ENCODE measurements at regions of chr7 and their contacts with region 1.

Region 1: DNA sequence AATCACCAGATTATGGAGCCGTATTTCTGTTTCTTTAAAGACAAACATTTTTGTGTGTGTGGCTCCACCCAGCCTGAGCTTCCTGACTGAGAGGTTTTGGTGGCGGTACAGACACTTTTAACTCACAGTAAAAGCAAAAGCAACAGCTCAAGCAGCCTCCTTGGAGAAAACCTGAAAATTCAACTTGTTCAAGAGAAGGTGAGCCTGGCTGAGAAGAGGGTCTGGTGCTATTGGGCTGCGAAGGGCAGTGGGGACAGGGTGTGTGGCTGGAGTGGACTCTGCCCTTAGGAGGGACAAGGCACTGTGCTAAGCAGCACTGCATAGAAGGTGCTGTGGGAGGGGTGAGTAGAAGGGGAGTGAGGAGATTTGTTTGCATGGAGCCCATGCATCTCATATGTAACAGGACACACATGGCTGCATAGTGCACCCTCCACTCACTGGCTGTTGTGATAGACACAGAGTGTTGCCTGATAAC is at the start of gene GIMAP7:
- DNase-seq: peak; percentile 38 to 90 (median 82)
- ATAC-seq: peak; percentile 86
- H3K4me3 ChIP-seq: peak within 1 kb of the TSS; percentile 94
- H3K4me3 Mint-ChIP-seq: peak within 1 kb of the TSS; percentile 93 to 100 (median 99)
- H3K27ac ChIP-seq: peak within 1 kb of the TSS; percentile 84
- H3K27ac Mint-ChIP-seq: peak within 1 kb of the TSS; percentile 94 to 99 (median 98)
- H3K4me1 ChIP-seq: peaks cover 45% of the 10 kb centered on the region in 2 donors
- H3K4me1 Mint-ChIP-seq: peaks cover 38 to 48% (median 46%) of the 10 kb centered on the region in 7 donors
- H3K27me3 ChIP-seq: no peaks in the 10 kb centered on the region
- H3K27me3 Mint-ChIP-seq: no peaks in the 10 kb centered on the region
- total RNA-seq, gene GIMAP7: 66.3 to 555 (median 321) TPM

Region 2: GRCh38 chr7:150322833-150323681 is 191.7 kb before region 1 on chr7 and contains the starts of genes ACTR3C and LRRC61:
- CTCF ChIA-PET with region 1: no interaction called
- POLR2A ChIA-PET with region 1: no interaction called
- intact Hi-C with region 1: loop called in 1 of 2 experiments (anchors 5 kb)
- DNase-seq: peak; percentile 23 to 75 (median 41)
- ATAC-seq: peak; percentile 67
- H3K4me3 ChIP-seq: peak within 1 kb of the TSS; percentile 95
- H3K4me3 Mint-ChIP-seq: peak within 1 kb of the TSS; percentile 88 to 100 (median 98)
- H3K27ac ChIP-seq: peak within 1 kb of the TSS; percentile 85
- H3K27ac Mint-ChIP-seq: peak within 1 kb of the TSS; percentile 94 to 99 (median 98)
- H3K4me1 ChIP-seq: peaks cover 5 to 21% of the 10 kb centered on the region in 2 donors
- H3K4me1 Mint-ChIP-seq: peaks cover 25 to 57% (median 44%) of the 10 kb centered on the region in 7 donors
- H3K27me3 ChIP-seq: no peaks in the 10 kb centered on the region
- H3K27me3 Mint-ChIP-seq: no peaks in the 10 kb centered on the region
- total RNA-seq, gene ACTR3C: 7.0 to 13.2 (median 10.6) TPM
- total RNA-seq, gene LRRC61: 8.3 to 30.0 (median 11.5) TPM

Region 3: GRCh38 chr7:150413640-150414081 is 101.1 kb before region 1 on chr7:
- CTCF ChIA-PET with region 1: no interaction called
- POLR2A ChIA-PET with region 1: no interaction called
- intact Hi-C with region 1: no loop called
- DNase-seq: no peak
- ATAC-seq: no peak
- H3K4me3 ChIP-seq: no peak overlapping the region
- H3K4me3 Mint-ChIP-seq: no peak overlapping the region
- H3K27ac ChIP-seq: no peak overlapping the region
- H3K27ac Mint-ChIP-seq: peak overlapping the region in 1 of 9 donors; percentile 20
- H3K4me1 ChIP-seq: no peaks in the 10 kb centered on the region
- H3K4me1 Mint-ChIP-seq: peaks cover 2 to 13% (median 3%) of the 10 kb centered on the region in 7 donors
- H3K27me3 ChIP-seq: no peaks in the 10 kb centered on the region
- H3K27me3 Mint-ChIP-seq: no peaks in the 10 kb centered on the region

Region 4: GRCh38 chr7:150466477-150466876 is 48.3 kb before region 1 on chr7:
- CTCF ChIA-PET with region 1: interaction called, 4 read pairs
- POLR2A ChIA-PET with region 1: interaction called, 637 read pairs
- intact Hi-C with region 1: no loop called
- DNase-seq: no peak
- ATAC-seq: no peak
- H3K4me3 ChIP-seq: no peak overlapping the region
- H3K4me3 Mint-ChIP-seq: peak overlapping the region in 7 of 10 donors; percentile 46 to 91 (median 61)
- H3K27ac ChIP-seq: peak overlapping the region; percentile 34
- H3K27ac Mint-ChIP-seq: peak overlapping the region in 7 of 9 donors; percentile 70 to 97 (median 86)
- H3K4me1 ChIP-seq: peaks cover 50 to 60% of the 10 kb centered on the region in 2 donors
- H3K4me1 Mint-ChIP-seq: peaks cover 61 to 98% (median 95%) of the 10 kb centered on the region in 7 donors
- H3K27me3 ChIP-seq: no peaks in the 10 kb centered on the region
- H3K27me3 Mint-ChIP-seq: no peaks in the 10 kb centered on the region

Region 5: GRCh38 chr7:150556521-150557138 is 41.8 kb after region 1 on chr7:
- CTCF ChIA-PET with region 1: no interaction called
- POLR2A ChIA-PET with region 1: interaction called, 526 read pairs
- intact Hi-C with region 1: loop called in 1 of 2 experiments (anchors 1 kb)
- DNase-seq: peak in 7 of 9 donors; percentile 45 to 84 (median 73)
- ATAC-seq: peak; percentile 99
- H3K4me3 ChIP-seq: peak overlapping the region; percentile 42
- H3K4me3 Mint-ChIP-seq: peak overlapping the region; percentile 48 to 92 (median 78)
- H3K27ac ChIP-seq: peak overlapping the region; percentile 66
- H3K27ac Mint-ChIP-seq: peak overlapping the region; percentile 89 to 99 (median 94)
- H3K4me1 ChIP-seq: peaks cover 47 to 74% of the 10 kb centered on the region in 2 donors
- H3K4me1 Mint-ChIP-seq: peaks cover 45 to 95% (median 90%) of the 10 kb centered on the region in 7 donors
- H3K27me3 ChIP-seq: no peaks in the 10 kb centered on the region
- H3K27me3 Mint-ChIP-seq: no peaks in the 10 kb centered on the region

Region 6: GRCh38 chr7:150685219-150686029 is 170.6 kb after region 1 on chr7 and contains the start of gene GIMAP2:
- CTCF ChIA-PET with region 1: no interaction called
- POLR2A ChIA-PET with region 1: interaction called, 70 read pairs
- intact Hi-C with region 1: loop called in 1 of 2 experiments (anchors 2 kb)
- DNase-seq: peak in 7 of 9 donors; percentile 40 to 73 (median 65)
- ATAC-seq: peak; percentile 90
- H3K4me3 ChIP-seq: peak within 1 kb of the TSS; percentile 97
- H3K4me3 Mint-ChIP-seq: peak within 1 kb of the TSS; percentile 88 to 100 (median 98)
- H3K27ac ChIP-seq: peak within 1 kb of the TSS; percentile 78
- H3K27ac Mint-ChIP-seq: peak within 1 kb of the TSS; percentile 91 to 100 (median 97)
- H3K4me1 ChIP-seq: peaks cover 49 to 53% of the 10 kb centered on the region in 2 donors
- H3K4me1 Mint-ChIP-seq: peaks cover 50 to 87% (median 81%) of the 10 kb centered on the region in 7 donors
- H3K27me3 ChIP-seq: no peaks in the 10 kb centered on the region
- H3K27me3 Mint-ChIP-seq: no peaks in the 10 kb centered on the region
- total RNA-seq, gene GIMAP2: 79.4 to 286 (median 122) TPM

Region 7: DNA sequence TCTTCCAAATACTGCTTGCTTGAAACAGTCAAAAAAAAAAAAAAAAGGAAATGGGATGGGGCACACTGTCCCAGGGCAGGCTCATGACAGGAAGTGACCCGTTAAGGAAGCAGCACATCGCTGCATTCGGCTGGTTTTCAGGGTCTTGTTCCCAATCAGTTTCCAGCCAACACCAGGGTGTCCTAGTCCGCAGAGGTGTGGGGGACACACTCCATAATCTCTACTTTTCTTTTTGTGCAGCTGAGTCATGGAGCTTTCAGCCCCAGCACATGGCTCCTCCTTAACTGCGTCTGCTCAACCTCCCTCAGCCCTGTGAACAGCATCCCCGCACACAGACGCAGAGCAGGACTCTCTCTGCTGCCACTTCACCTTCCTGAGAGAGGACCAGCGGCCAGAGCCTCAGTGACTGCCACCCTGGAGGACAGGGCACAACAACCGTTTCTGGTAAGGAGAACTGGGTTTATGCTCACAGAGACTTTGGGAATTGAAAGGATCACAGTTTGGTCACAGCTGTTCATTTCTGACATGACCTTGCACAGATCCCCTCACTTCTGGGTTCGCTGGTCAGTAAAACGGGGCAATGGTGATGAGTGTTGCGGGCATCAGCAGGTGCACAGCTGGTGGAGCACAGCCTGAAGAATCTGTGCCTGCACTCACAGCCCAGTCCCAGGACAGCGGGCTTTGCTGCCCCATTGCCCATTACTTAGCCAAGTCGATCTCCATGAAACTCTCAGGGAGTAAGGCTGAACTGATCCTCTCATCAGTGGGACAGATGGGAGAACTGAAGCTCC is 222.7 kb after region 1 on chr7 and contains the start of gene GIMAP5:
- CTCF ChIA-PET with region 1: interaction called, 5 read pairs
- POLR2A ChIA-PET with region 1: interaction called, 212 read pairs
- intact Hi-C with region 1: loop called (anchors 1 to 2 kb)
- DNase-seq: peak in 6 of 9 donors; percentile 47 to 57 (median 56)
- ATAC-seq: peak; percentile 79
- H3K4me3 ChIP-seq: peak within 1 kb of the TSS; percentile 84
- H3K4me3 Mint-ChIP-seq: peak within 1 kb of the TSS; percentile 90 to 100 (median 98)
- H3K27ac ChIP-seq: peak within 1 kb of the TSS; percentile 82
- H3K27ac Mint-ChIP-seq: peak within 1 kb of the TSS; percentile 87 to 99 (median 96)
- H3K4me1 ChIP-seq: peaks cover 49 to 56% of the 10 kb centered on the region in 2 donors
- H3K4me1 Mint-ChIP-seq: peaks cover 56 to 73% (median 65%) of the 10 kb centered on the region in 7 donors
- H3K27me3 ChIP-seq: no peaks in the 10 kb centered on the region
- H3K27me3 Mint-ChIP-seq: no peaks in the 10 kb centered on the region
- total RNA-seq, gene GIMAP5: 58.1 to 422 (median 214) TPM

Measured in naive thymus-derived CD4-positive, alpha-beta T cell (primary cell).